ENCODE measurements at regions of chr15 and their contacts with region 1.

Region 1: GRCh38 chr15:44593042-44593736 is 56.2 kb downstream of the EIF3J start:
- DNase-seq: no peak
- H3K4me3 ChIP-seq: no peak overlapping the region
- H3K27ac ChIP-seq: no peak overlapping the region
- H3K4me1 ChIP-seq: no peaks in the 10 kb centered on the region
- H3K27me3 ChIP-seq: no peaks in the 10 kb centered on the region
- CTCF ChIP-seq: peak; percentile 11 to 33 (median 18)
- EP300 ChIP-seq: no peak
- POLR2A ChIP-seq: no peak

Region 2: GRCh38 chr15:44654858-44655257 is 61.7 kb after region 1 on chr15:
- in situ Hi-C with region 1: loop called in 1 of 4 experiments (anchors 10 kb)
- intact Hi-C with region 1: no loop called
- DNase-seq: no peak
- H3K4me3 ChIP-seq: no peak overlapping the region
- H3K27ac ChIP-seq: no peak overlapping the region
- H3K4me1 ChIP-seq: no peaks in the 10 kb centered on the region
- H3K27me3 ChIP-seq: no peaks in the 10 kb centered on the region
- CTCF ChIP-seq: no peak
- EP300 ChIP-seq: no peak
- POLR2A ChIP-seq: no peak

Region 3: DNA sequence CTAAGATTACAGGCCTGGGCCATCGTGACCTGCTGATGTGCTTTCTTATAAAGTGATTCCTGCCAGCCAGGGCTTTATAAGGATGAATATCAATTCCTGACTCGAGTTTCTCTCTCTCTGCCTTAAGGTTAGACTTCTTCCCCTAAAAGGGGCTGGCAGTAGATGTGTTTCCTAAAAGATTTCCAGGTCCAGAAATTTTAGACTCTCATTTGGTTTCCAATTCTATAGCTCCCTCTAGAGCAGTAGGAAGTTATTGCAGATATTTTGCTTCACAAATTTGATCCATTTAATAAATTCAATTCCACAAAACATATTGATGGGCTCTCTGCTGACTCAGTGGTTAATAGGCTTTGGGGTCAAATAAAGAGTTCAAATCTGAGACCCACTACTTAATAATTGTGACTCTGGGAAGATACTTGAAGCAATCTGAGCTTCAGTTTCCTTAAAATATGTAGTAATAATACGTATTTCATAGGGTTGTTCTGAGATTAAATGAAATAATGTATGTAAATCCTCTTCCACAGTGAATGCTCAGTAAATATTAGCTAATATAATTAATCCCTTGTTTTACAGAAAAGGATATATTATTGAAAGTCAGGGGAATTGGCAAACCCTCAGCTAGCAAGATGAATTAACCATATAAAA is 145.3 kb after region 1 on chr15:
- in situ Hi-C with region 1: loop called in 1 of 4 experiments (anchors 10 kb)
- intact Hi-C with region 1: no loop called
- DNase-seq: no peak
- H3K4me3 ChIP-seq: no peak overlapping the region
- H3K27ac ChIP-seq: no peak overlapping the region
- H3K4me1 ChIP-seq: peaks cover 0 to 20% (median 2%) of the 10 kb centered on the region in 4 donors
- H3K27me3 ChIP-seq: no peaks in the 10 kb centered on the region
- CTCF ChIP-seq: peak; percentile 67 to 83 (median 74)
- EP300 ChIP-seq: no peak
- POLR2A ChIP-seq: no peak

Region 4: DNA sequence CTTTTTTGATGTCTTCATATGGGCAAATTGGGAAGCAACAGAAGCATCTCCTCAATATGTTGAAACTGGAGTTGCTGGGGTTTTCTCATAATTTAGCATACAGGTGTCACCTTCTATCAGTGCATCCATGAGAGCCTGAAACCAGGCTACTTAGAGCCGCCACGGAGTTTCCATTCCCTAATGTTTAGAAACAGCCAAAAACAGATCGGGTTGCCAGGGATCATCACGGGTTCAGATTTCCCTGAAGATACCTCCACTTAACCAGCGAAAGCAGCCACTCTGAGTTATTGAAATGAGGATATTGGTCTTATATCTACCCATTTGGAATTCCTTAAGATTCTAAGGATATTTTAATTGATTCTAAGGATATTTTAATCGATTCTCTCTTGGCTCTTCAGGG is 377.8 kb after region 1 on chr15:
- in situ Hi-C with region 1: no loop called
- intact Hi-C with region 1: no loop called
- DNase-seq: no peak
- H3K4me3 ChIP-seq: no peak overlapping the region
- H3K27ac ChIP-seq: no peak overlapping the region
- H3K4me1 ChIP-seq: no peaks in the 10 kb centered on the region
- H3K27me3 ChIP-seq: no peaks in the 10 kb centered on the region
- CTCF ChIP-seq: no peak
- EP300 ChIP-seq: no peak
- POLR2A ChIP-seq: no peak